ENCODE measurements at regions of chr20 and their contacts with region 1.

Region 1: GRCh38 chr20:49219089-49219923 is at the start of gene DDX27:
- DNase-seq: peak; percentile 93 to 99 (median 98)

Region 2: GRCh38 chr20:49115600-49115999 is 103.7 kb before region 1 on chr20:
- intact Hi-C with region 1: no loop called
- DNase-seq: no peak

Region 3: GRCh38 chr20:49132995-49133478 is 86.3 kb before region 1 on chr20:
- intact Hi-C with region 1: loop called (anchors 5 kb)
- DNase-seq: peak in 12 of 42 donors; percentile 14 to 80 (median 53)

Region 4: DNA sequence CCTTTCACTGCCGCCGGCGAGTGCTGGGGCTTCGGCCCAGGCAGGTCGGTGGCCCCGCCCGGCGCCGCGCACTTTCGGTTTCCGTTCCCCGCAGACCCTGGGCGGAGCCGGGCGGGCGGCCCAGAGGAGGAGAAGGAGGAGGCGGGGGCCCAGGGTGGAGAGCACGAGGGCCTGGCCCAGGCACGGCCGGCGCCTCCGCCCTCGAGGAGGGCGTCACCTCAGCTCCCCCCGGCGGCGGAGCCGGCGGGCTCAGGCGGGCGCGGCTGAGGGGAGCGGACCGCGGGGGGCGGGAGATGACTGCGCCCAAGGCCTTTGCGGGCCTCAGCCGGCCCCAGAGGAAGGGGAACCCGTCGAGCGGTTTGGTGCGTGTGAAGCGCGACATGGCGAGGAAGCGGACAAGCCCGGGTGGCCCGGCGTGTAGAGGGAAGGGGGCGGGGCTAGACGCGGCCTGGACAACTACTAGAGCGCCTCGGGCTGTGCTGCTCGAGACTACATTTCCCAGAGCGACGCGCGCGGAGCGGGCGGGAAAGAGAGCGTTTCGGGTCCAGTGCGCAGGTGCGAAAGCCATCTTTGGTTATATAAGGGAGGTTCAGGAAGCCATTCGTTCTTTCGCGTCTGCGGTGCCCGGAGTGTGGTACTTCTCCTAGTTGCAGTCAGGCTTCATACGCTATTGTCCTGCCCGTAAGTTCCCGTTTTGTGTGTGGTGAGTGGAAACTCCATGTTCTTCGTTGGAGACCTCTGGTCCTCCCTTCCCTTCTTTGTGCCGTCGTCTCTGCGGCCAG is 58.9 kb after region 1 on chr20 and contains the start of gene ZNFX1:
- intact Hi-C with region 1: loop called (anchors 2 kb)
- DNase-seq: peak; percentile 96 to 99 (median 98)